Right cardiac atrium (tissue), 5 donors: ENCODE measurements at regions of chr10 and their contacts with region 1.

Region 1: GRCh38 chr10:72204296-72204695 is 11.5 kb upstream of the ANAPC16 start:
- DNase-seq: no peak
- ATAC-seq: no peak
- H3K4me3 ChIP-seq: no peak overlapping the region
- H3K27ac ChIP-seq: no peak overlapping the region
- H3K4me1 ChIP-seq: no peaks in the 10 kb centered on the region
- H3K27me3 ChIP-seq: no peaks in the 10 kb centered on the region

Region 2: DNA sequence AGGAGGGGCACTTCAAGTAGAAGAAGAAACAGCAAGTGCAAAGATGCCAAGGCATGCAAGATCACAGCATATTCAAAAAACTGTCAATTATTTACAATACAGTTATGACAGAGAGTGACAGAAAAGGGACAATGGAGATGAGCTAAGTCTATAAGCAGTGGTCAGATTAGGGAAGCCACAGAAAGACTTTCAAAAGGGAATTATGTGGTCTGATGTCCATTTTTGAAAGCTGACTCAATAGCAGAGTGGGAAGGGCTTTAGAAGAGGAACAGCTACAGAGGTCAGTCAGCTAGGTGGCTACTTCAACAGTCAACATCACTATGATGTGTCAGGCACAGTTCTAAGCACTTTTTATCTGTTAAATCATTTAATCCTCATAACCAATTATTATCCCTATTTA is 70.8 kb before region 1 on chr10:
- intact Hi-C with region 1: loop called in 1 of 4 experiments (anchors 10 kb)
- DNase-seq: no peak
- ATAC-seq: peak in 1 of 2 donors; percentile 59
- H3K4me3 ChIP-seq: no peak overlapping the region
- H3K27ac ChIP-seq: no peak overlapping the region
- H3K4me1 ChIP-seq: no peaks in the 10 kb centered on the region
- H3K27me3 ChIP-seq: no peaks in the 10 kb centered on the region